Dorsolateral prefrontal cortex (tissue), 120 donors: ENCODE measurements at regions of chr11 and their contacts with region 1.

Region 1: DNA sequence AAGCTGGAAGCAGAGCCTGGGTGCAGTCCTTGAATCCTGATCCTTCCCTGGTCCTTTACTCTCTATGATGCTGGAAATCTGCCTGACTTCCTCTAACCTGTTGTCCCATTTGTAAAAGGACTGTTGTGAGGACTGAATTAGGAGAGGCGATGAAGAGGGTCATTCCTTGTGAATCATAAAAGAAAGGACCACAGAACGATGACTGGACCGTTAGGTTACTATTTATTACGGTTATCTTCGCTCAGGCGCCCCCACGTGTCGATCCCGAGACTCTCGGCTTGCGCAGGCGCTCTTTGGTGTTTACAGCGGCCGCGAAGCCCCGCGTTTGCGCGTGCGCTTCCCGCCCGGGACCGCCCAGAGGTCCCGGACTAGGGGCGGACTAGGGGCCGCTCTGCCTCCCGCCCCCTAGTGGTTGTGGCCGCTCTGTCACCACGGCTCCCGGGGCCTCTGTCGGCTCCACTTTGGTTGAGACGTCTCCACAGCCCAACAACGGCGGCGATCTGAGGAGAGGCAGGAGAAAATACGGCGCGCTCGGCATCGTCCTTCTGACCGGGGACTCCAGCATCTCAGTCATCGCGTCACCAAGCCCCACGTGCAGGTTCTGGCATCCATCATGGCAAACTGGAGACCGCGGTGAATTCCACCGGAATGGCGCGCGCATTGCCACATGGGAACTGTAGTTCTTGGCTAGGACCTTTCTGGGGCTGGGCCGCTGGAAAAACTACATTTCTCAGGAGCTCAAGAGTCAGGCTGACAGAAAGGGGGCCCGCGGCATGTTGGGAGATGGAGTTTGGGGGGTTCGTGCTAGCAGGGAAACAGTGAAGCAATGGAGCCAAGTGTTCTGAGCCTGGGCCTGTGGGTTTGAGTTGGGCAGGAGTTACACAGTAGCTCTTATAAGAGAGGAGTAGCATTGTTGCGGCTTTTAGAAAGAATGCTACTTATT is at the start of gene STARD10:
- DNase-seq: peak; percentile 94 to 99 (median 97)
- H3K4me3 ChIP-seq: peak within 1 kb of the TSS; percentile 45 to 90 (median 72)
- H3K27ac ChIP-seq: peak within 1 kb of the TSS; percentile 92 to 100 (median 98)
- H3K27me3 ChIP-seq: no peaks in the 10 kb centered on the region
- CTCF ChIP-seq: peak; percentile 89 to 100 (median 99)
- total RNA-seq, gene STARD10: 31.5 to 113 (median 51.1) TPM

Region 2: GRCh38 chr11:72683782-72684200 is 109.9 kb before region 1 on chr11:
- intact Hi-C with region 1: no loop called
- DNase-seq: peak; percentile 58 to 86 (median 76)
- H3K4me3 ChIP-seq: no peak overlapping the region
- H3K27ac ChIP-seq: peak overlapping the region in 26 of 59 donors; percentile 11 to 85 (median 31)
- H3K27me3 ChIP-seq: no peaks in the 10 kb centered on the region
- CTCF ChIP-seq: peak; percentile 75 to 98 (median 94)

Region 3: GRCh38 chr11:72722050-72722748 is 71.5 kb before region 1 on chr11:
- intact Hi-C with region 1: loop called (anchors 1 kb)
- DNase-seq: peak; percentile 65 to 91 (median 86)
- H3K4me3 ChIP-seq: peak overlapping the region; percentile 12 to 75 (median 62)
- H3K27ac ChIP-seq: peak overlapping the region; percentile 29 to 91 (median 81)
- H3K27me3 ChIP-seq: no peaks in the 10 kb centered on the region
- CTCF ChIP-seq: peak in 6 of 56 donors; percentile 6 to 21 (median 12)

Region 4: GRCh38 chr11:72752088-72752914 is 41.4 kb before region 1 on chr11 and contains the start of gene ARAP1:
- intact Hi-C with region 1: loop called in 1 of 2 experiments (anchors 2 kb)
- DNase-seq: peak in 7 of 10 donors; percentile 39 to 76 (median 64)
- H3K4me3 ChIP-seq: peak within 1 kb of the TSS; percentile 59 to 95 (median 73)
- H3K27ac ChIP-seq: peak within 1 kb of the TSS in 57 of 59 donors; percentile 34 to 93 (median 86)
- H3K27me3 ChIP-seq: no peaks in the 10 kb centered on the region
- CTCF ChIP-seq: peak in 14 of 56 donors; percentile 6 to 37 (median 20)
- total RNA-seq, gene ARAP1: 42.2 to 126 (median 68.6) TPM

Region 5: GRCh38 chr11:72777762-72778278 is 15.9 kb before region 1 on chr11:
- intact Hi-C with region 1: loop called in 1 of 2 experiments (anchors 2 kb)
- DNase-seq: peak in 1 of 10 donors; percentile 54
- H3K4me3 ChIP-seq: no peak overlapping the region
- H3K27ac ChIP-seq: peak overlapping the region in 57 of 59 donors; percentile 7 to 93 (median 79)
- H3K27me3 ChIP-seq: no peaks in the 10 kb centered on the region
- CTCF ChIP-seq: no peak

Region 6: GRCh38 chr11:72814286-72815109 is 20.8 kb after region 1 on chr11 and contains the start of gene ATG16L2:
- intact Hi-C with region 1: loop called in 1 of 2 experiments (anchors 1 kb)
- DNase-seq: peak in 8 of 10 donors; percentile 76 to 90 (median 82)
- H3K4me3 ChIP-seq: peak within 1 kb of the TSS; percentile 64 to 99 (median 92)
- H3K27ac ChIP-seq: peak within 1 kb of the TSS; percentile 81 to 99 (median 96)
- H3K27me3 ChIP-seq: no peaks in the 10 kb centered on the region
- CTCF ChIP-seq: peak in 50 of 56 donors; percentile 8 to 73 (median 51)
- total RNA-seq, gene ATG16L2: 17.7 to 47.0 (median 30.9) TPM